Activated naive CD4-positive, alpha-beta T cell treated with anti-CD3 and anti-CD28 coated beads for 36 hours (primary cell): ENCODE measurements at regions of chr15 and their contacts with region 1.

Region 1: GRCh38 chr15:101070502-101071273 is 151.5 kb downstream of the LRRK1 start:
- DNase-seq: peak; percentile 21
- H3K4me3 Mint-ChIP-seq: no peak overlapping the region
- H3K27ac Mint-ChIP-seq: peak overlapping the region; percentile 42
- H3K4me1 Mint-ChIP-seq: peaks cover 11% of the 10 kb centered on the region
- H3K27me3 Mint-ChIP-seq: no peaks in the 10 kb centered on the region

Region 2: DNA sequence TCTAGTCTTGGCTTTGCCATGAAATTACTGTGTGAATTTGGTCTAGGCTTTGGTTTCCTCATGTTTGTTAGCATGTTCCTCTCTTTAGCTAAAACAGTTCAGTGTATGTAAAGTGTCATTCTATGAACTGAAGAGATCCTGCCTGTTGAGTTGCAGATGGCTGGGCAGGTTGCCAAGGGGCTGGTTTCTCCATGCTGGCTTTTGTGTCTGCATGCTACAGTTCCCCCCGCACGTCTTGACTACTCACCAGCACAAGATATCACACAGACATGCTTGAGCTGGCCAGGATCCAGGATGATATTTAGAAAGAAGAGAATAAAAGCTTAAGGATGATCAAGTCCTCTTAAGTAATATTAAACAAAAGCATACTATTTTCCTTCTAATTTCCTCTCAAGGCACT is 632.1 kb before region 1 on chr15:
- CTCF ChIA-PET with region 1: no interaction called
- intact Hi-C with region 1: loop called (anchors 5 kb)
- DNase-seq: peak; percentile 51
- H3K4me3 Mint-ChIP-seq: no peak overlapping the region
- H3K27ac Mint-ChIP-seq: no peak overlapping the region
- H3K4me1 Mint-ChIP-seq: peaks cover 5% of the 10 kb centered on the region
- H3K27me3 Mint-ChIP-seq: no peaks in the 10 kb centered on the region

Region 3: DNA sequence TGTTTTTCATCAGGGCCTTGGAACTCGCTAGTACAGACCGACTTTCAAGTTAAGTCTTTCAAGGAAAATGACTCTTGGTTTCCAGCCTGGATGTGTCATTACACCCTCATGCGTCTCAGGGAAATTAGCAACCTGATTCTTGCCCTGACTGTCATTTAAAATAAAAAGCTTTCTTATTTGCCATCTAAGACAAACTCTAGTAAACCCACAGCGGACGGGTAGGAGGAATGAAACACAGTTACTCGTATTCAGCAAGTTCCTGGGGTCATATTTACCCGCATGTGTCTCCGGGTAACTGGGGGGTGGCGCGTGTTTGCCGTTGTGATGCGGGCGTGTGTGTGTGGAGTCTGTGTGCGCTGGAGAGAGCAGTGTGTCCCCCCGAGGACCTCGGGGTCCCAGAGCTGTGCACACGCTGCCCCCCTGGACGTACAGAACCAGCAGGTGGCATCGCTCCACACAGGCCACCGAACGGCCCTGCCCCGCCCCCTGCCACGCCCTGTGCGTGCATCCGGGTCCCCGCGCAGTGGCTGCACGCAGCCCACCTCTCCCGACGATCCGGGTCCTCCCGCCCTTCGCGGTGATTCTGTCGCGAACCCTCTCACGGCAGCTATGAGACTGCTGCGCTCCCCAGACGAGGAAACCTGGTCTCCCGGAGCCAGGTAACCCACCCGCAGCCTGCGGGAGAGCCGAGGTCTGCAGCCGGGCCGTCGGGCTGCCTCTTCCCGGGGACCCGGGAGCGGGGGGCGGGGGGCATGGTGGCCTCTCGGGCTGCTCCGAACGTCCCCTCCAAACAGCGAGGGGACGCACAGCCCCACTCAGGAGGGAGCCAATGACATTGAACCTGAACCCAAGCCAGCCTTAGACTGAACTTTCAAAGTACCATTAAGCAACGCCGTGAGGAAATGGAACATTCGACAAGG is 221.2 kb before region 1 on chr15:
- CTCF ChIA-PET with region 1: no interaction called
- intact Hi-C with region 1: no loop called
- DNase-seq: peak; percentile 59
- H3K4me3 Mint-ChIP-seq: peak overlapping the region; percentile 74
- H3K27ac Mint-ChIP-seq: no peak overlapping the region
- H3K4me1 Mint-ChIP-seq: peaks cover 6% of the 10 kb centered on the region
- H3K27me3 Mint-ChIP-seq: peaks cover 9% of the 10 kb centered on the region

Region 4: DNA sequence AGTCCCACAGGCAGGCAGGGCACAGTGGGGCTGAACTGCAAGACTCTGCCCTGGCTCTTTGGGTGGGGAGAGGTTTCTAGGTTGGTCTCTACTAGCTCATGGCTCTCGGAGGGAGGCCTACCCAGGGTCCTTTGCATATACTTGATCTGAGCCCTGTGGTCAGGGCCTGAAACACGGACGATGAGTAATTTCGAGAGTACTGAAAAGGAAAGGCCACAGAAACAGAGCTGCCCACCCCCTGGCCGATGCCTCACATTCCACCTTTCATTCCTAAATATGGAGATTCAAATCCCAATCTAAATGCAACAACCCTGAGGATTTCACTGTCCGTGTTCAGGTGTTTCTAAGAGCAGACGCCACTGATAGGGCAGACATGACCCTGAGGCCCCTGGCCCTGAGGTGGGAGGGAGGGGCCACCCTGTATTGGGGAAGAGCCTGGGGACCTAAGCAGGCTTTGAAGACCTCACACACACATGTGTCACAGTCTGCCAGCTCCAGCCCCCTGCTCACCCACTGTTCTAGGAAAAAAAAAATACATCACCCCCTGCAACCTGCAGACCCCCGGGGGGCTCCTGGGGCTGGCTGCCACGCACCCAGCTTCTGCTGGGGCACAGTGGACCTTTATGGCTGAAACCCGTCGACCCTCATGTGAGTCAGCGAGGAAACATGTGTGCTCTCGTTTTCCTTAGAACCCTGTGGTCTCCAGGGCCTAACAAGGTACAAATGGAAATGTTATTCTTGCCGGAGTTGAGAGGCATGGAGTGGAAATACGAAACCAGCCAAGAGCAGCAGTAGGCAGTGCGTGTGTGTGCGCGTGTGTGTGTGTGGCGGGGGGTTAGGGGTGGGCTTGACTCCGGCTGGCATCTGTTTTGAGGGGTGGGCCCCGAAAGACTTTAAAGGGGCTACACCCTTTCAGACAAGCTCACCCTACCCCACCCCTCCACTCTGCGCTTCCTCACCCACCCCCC is 68.5 kb after region 1 on chr15:
- CTCF ChIA-PET with region 1: no interaction called
- intact Hi-C with region 1: no loop called
- DNase-seq: no peak
- H3K4me3 Mint-ChIP-seq: no peak overlapping the region
- H3K27ac Mint-ChIP-seq: no peak overlapping the region
- H3K4me1 Mint-ChIP-seq: peaks cover 19% of the 10 kb centered on the region
- H3K27me3 Mint-ChIP-seq: peaks cover 8% of the 10 kb centered on the region